Activated CD8-positive, alpha-beta T cell treated with anti-CD3 and anti-CD28 coated beads for 36 hours (primary cell): ENCODE measurements at regions of chrX and their contacts with region 1.

Region 1: DNA sequence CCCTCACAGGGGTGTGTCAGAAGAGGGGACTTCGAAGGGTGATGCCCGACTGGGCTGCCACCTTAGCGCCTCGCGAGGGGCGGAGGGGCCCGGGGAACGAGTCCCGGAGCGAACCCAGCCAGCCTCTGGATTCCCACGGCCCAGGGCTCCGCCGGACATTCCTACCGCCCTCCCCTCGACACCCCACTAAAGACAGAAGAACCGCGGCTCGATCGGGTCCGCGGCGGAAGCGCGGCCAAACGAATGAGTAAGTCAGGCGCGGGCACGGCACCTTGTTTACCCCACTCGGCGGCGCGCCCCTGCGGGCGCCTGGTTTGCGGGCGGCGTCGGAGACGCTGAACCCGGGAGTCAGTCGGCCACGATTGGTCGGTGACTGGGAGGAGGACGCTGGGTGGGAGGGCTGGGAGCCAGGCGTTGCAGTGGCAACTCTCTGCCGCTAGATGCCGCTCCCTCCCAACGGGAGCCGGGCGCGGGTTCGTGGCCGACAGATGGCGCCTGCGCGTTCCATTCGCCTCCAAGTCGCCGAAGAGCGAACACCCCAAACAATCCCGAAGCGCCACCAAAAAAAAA is 1.4 kb upstream of the STAG2 start:
- DNase-seq: peak; percentile 92
- ATAC-seq: peak; percentile 68
- H3K4me3 Mint-ChIP-seq: peak overlapping the region; percentile 98
- H3K27ac Mint-ChIP-seq: peak overlapping the region; percentile 100
- H3K4me1 Mint-ChIP-seq: peaks cover 10% of the 10 kb centered on the region
- H3K27me3 Mint-ChIP-seq: no peaks in the 10 kb centered on the region
- CTCF ChIP-seq: peak; percentile 66

Region 2: GRCh38 chrX:123833387-123833786 is 126.7 kb before region 1 on chrX:
- CTCF ChIA-PET with region 1: interaction called, 15 read pairs
- POLR2A ChIA-PET with region 1: no interaction called
- intact Hi-C with region 1: no loop called
- DNase-seq: peak; percentile 67
- ATAC-seq: peak; percentile 91
- H3K4me3 Mint-ChIP-seq: no peak overlapping the region
- H3K27ac Mint-ChIP-seq: no peak overlapping the region
- H3K4me1 Mint-ChIP-seq: peaks cover 7% of the 10 kb centered on the region
- H3K27me3 Mint-ChIP-seq: peaks cover 4% of the 10 kb centered on the region
- CTCF ChIP-seq: peak; percentile 68

Region 3: DNA sequence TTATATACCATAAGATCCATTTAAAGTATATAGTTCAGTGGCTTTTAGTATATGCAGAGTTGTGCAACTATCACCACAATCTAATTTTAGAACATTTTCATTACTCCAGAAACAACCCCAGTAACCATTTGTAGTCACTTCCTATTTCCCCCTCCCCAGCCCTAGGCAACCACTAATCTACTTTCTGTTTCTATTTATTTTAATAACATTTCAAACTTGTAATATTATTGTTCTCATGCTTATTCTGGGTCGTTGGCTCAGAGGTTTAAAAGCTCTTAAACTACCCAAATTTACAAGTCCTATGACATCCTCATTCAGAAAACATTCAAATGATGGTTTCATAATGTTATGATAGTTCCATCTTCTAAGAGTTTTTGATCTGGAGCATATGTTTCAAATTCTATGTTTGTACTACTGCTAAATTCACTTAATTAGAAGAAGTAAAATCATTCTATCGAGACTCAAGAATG is 81.8 kb before region 1 on chrX:
- CTCF ChIA-PET with region 1: no interaction called
- POLR2A ChIA-PET with region 1: no interaction called
- intact Hi-C with region 1: loop called (anchors 10 kb)
- DNase-seq: no peak
- ATAC-seq: peak; percentile 67
- H3K4me3 Mint-ChIP-seq: peak overlapping the region; percentile 46
- H3K27ac Mint-ChIP-seq: peak overlapping the region; percentile 77
- H3K4me1 Mint-ChIP-seq: peaks cover 35% of the 10 kb centered on the region
- H3K27me3 Mint-ChIP-seq: no peaks in the 10 kb centered on the region
- CTCF ChIP-seq: no peak

Region 4: GRCh38 chrX:124005228-124005627 is 45.1 kb after region 1 on chrX:
- CTCF ChIA-PET with region 1: no interaction called
- POLR2A ChIA-PET with region 1: no interaction called
- intact Hi-C with region 1: no loop called
- DNase-seq: no peak
- ATAC-seq: peak; percentile 74
- H3K4me3 Mint-ChIP-seq: no peak overlapping the region
- H3K27ac Mint-ChIP-seq: peak overlapping the region; percentile 70
- H3K4me1 Mint-ChIP-seq: peaks cover 49% of the 10 kb centered on the region
- H3K27me3 Mint-ChIP-seq: no peaks in the 10 kb centered on the region
- CTCF ChIP-seq: no peak

Region 5: DNA sequence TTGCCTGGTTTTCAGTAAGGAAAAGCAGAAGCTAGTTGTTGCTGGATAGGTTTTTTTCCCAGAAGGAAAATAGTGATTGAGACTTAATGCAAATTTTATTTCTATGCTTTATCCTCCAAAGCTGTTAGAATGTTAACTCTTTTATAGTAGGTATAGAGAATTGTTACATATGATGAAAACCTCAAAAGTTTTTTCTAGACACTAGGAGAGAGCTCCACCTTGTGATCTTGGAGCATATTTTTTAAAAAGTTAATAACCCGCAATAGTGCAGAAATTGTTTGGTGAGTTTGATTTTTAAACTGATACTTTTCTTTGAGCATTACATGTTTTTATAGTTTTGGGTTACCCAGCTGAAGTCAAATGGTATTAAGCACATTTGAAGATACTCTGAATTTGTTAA is 57.9 kb after region 1 on chrX:
- CTCF ChIA-PET with region 1: interaction called, 3 read pairs
- POLR2A ChIA-PET with region 1: interaction called, 6 read pairs
- intact Hi-C with region 1: loop called (anchors 5 kb)
- DNase-seq: no peak
- ATAC-seq: no peak
- H3K4me3 Mint-ChIP-seq: no peak overlapping the region
- H3K27ac Mint-ChIP-seq: peak overlapping the region; percentile 20
- H3K4me1 Mint-ChIP-seq: peaks cover 40% of the 10 kb centered on the region
- H3K27me3 Mint-ChIP-seq: no peaks in the 10 kb centered on the region
- CTCF ChIP-seq: no peak

Region 6: DNA sequence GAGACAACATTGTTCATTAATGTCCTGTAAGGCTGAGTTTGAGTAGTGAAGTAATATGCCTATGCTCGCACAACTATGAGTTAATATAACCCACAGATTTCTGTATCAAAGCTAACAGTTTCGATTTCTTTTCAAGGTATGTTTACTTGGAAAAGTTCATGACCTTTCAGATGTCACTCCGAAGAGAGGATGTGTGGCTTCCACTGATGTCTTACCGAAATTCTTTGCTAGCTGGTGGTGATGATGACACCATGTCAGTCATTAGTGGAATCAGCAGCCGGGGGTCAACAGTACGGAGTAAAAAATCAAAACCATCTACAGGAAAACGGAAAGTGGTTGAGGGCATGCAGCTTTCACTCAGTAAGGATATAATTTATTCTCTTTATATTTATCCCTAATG is 126.3 kb after region 1 on chrX:
- CTCF ChIA-PET with region 1: no interaction called
- POLR2A ChIA-PET with region 1: no interaction called
- intact Hi-C with region 1: no loop called
- DNase-seq: peak; percentile 52
- ATAC-seq: peak; percentile 93
- H3K4me3 Mint-ChIP-seq: no peak overlapping the region
- H3K27ac Mint-ChIP-seq: peak overlapping the region; percentile 81
- H3K4me1 Mint-ChIP-seq: peaks cover 30% of the 10 kb centered on the region
- H3K27me3 Mint-ChIP-seq: no peaks in the 10 kb centered on the region
- CTCF ChIP-seq: no peak

Region 7: GRCh38 chrX:124217304-124218251 is 257.5 kb after region 1 on chrX:
- CTCF ChIA-PET with region 1: no interaction called
- POLR2A ChIA-PET with region 1: no interaction called
- intact Hi-C with region 1: loop called (anchors 5 kb)
- DNase-seq: peak; percentile 80
- ATAC-seq: peak; percentile 89
- H3K4me3 Mint-ChIP-seq: peak overlapping the region; percentile 52
- H3K27ac Mint-ChIP-seq: peak overlapping the region; percentile 98
- H3K4me1 Mint-ChIP-seq: peaks cover 83% of the 10 kb centered on the region
- H3K27me3 Mint-ChIP-seq: no peaks in the 10 kb centered on the region
- CTCF ChIP-seq: no peak